HCT116 (cell line): ENCODE measurements at regions of chr17 and their contacts with region 1.

Region 1: DNA sequence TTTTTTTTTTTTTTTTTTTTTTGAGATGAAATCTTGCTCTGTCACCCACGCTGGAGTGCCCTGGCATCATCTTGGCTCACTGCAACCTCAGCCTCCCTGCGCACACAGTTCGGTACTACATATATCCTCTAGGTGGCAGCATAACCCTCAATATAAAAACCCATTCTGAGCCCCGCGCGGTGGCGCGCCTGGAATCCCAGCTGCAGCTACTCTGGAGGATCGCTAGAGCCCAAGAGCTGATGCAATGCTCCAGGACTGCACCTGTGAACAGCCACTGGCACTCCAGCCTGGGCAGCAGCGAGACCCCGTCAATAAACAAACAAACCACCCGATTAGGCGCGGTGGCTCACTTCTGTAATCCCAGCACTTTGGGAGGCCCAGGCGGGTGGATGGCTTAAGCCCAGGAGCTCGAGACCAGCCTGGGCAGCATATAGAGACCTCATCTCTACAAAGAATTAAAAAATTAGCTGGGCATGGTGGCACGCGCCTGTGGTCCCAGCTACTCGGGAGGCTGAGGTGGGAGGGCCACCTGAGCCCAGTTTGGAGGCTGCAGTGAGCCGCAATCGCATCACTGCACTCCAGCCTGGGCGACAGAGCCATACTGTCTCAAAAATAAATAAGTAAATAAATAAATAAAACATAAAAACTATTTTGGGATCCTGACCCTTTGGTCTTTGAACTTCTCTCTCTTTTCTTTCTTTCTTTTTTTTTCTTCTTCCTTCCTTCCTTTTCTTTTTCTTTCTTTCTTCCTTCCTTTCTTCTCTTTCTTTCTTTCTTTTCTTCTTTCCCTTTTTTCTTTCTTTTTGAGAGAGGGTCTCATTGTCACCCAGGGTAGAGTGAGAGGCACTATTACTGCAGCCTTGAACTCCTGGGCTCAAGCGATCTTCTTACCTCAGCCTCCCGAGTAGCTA is 15.4 kb upstream of the AKAP10 start:
- DNase-seq: peak; percentile 89
- ATAC-seq: peak; percentile 98
- H3K4me3 ChIP-seq: peak overlapping the region; percentile 17 to 37; a peak in 3 of 4 replicates
- H3K27ac ChIP-seq: no peak overlapping the region
- H3K4me1 ChIP-seq: peaks cover 9% of the 10 kb centered on the region in 2 experiments; a peak in 2 of 4 replicates
- H3K27me3 ChIP-seq: no peaks in the 10 kb centered on the region
- CTCF ChIP-seq: peak; percentile 69 to 97 (median 79)
- POLR2A ChIP-seq: no peak
- RAD21 ChIP-seq: peak; percentile 89

Region 2: GRCh38 chr17:20009302-20010098 is 16.4 kb after region 1 on chr17 and contains the start of gene SPECC1:
- CTCF ChIA-PET with region 1: interaction called, 47 read pairs
- POLR2A ChIA-PET with region 1: interaction called, 3 read pairs
- RAD21 ChIA-PET with region 1: interaction called in 1 of 2 experiments, 7 read pairs
- intact Hi-C with region 1: no loop called
- DNase-seq: peak; percentile 49
- ATAC-seq: peak; percentile 93
- H3K4me3 ChIP-seq: peak within 1 kb of the TSS; percentile 59 to 71
- H3K27ac ChIP-seq: peak within 1 kb of the TSS; percentile 53
- H3K4me1 ChIP-seq: peaks cover 5 to 25% of the 10 kb centered on the region in 2 experiments; a peak in 2 of 4 replicates
- H3K27me3 ChIP-seq: 0 out of 2 replicates have a peak, but pooled peaks cover 5% of the 10 kb centered on the region
- CTCF ChIP-seq: peak; percentile 59 to 96 (median 79); a peak in 4 of 6 replicates
- POLR2A ChIP-seq: no peak
- RAD21 ChIP-seq: no peak
- total RNA-seq, gene SPECC1: 43.5 TPM

Region 3: DNA sequence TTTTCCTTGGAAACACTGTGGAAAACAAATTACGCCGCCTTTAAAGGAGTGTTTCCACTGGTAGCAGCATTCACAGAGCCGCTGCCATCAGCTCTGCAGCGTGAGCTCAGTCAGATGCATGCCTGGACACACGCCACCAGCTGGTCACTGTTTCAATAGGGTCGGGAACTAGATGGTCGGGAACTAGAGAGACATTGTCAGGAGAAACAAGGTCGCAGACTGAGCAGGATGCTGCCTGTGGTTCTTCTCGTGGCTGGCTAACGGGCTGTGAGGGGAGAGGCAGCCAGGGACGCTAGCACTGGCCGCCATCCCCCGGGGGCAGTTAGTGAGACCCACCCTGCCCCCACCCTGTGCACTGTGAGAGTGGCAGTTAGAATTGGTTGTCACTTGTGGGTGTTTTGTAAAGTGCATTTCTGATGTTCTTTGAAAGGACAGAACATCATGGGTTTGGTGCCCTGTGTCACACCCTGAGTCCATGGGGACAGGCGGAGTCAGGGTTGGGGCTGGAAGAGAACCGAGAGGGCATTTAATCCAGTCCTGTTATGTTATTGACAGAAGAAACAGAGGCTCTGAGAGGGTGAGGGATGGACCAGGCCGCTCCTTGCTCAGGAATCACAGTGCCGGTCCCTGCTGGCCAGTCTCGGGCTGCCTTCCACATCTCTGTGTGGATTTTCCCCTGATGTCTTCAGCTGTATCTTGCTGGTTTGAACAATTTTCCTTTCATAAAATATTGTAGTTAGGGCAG is 102.5 kb after region 1 on chr17:
- CTCF ChIA-PET with region 1: interaction called, 25 read pairs
- POLR2A ChIA-PET with region 1: no interaction called
- RAD21 ChIA-PET with region 1: interaction called in 1 of 2 experiments, 3 read pairs
- intact Hi-C with region 1: no loop called
- DNase-seq: peak; percentile 22
- ATAC-seq: peak; percentile 94
- H3K4me3 ChIP-seq: peak overlapping the region in 1 of 2 experiments; percentile 11; a peak in 1 of 4 replicates
- H3K27ac ChIP-seq: no peak overlapping the region
- H3K4me1 ChIP-seq: peaks cover 7 to 10% of the 10 kb centered on the region in 2 experiments; a peak in 2 of 4 replicates
- H3K27me3 ChIP-seq: no peaks in the 10 kb centered on the region
- CTCF ChIP-seq: peak in 2 of 3 experiments; percentile 35 to 53; a peak in 5 of 6 replicates
- POLR2A ChIP-seq: no peak
- RAD21 ChIP-seq: peak; percentile 33

Region 4: DNA sequence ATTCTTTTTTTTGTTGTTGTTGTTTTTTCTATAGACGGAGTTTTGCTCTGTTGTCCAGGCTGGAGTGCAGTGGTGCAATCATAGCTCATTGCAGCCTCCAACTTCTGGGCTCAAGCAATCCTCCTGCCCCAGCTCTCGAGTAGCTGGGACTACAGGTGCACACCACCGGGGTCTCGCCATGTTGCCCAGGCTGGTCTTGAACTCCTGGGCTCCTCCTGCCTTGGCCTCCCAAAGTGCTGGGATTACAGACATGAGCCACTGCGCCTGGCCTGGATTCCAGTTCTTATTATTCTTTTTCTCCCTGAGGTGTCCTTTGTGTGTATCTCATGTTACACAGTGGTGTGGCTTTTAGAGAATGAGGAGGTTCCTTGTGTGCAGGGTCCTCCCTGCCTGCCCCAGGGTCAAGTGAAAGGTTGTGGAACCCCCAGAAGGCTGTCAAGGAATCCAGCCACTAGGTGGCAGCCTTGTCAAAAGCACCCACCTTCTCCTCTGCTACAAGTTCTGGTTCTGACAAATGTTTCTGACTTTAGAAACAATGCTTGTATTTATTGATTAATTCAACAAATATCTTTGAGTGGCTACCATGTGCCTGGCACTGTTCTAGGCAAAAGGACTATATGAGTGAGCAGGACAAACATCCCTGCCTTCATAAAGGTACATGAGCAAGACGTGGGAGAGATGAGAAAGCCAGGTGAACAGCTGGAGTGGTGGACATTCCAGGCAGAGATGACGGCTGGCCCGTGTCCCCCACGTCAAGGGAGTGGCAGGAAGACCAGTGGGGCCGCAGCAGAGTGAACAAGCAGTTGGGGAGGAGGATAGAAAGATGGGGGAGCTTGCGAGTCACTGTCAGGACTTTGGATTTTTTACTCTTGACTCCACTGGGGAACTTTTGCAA is 128.5 kb after region 1 on chr17:
- CTCF ChIA-PET with region 1: interaction called, 74 read pairs
- POLR2A ChIA-PET with region 1: interaction called, 3 read pairs
- RAD21 ChIA-PET with region 1: interaction called, 6 to 10 read pairs
- intact Hi-C with region 1: loop called (anchors 1 kb)
- DNase-seq: peak; percentile 34
- ATAC-seq: peak; percentile 85
- H3K4me3 ChIP-seq: no peak overlapping the region
- H3K27ac ChIP-seq: no peak overlapping the region
- H3K4me1 ChIP-seq: peaks cover 5% of the 10 kb centered on the region in 2 experiments; a peak in 2 of 4 replicates
- H3K27me3 ChIP-seq: no peaks in the 10 kb centered on the region
- CTCF ChIP-seq: peak; percentile 88 to 95 (median 93)
- POLR2A ChIP-seq: no peak
- RAD21 ChIP-seq: peak; percentile 88

Region 5: GRCh38 chr17:20226814-20227482 is 233.9 kb after region 1 on chr17:
- CTCF ChIA-PET with region 1: interaction called, 9 read pairs
- POLR2A ChIA-PET with region 1: no interaction called
- RAD21 ChIA-PET with region 1: no interaction called
- intact Hi-C with region 1: loop called (anchors 10 kb)
- DNase-seq: peak; percentile 34
- ATAC-seq: peak; percentile 100
- H3K4me3 ChIP-seq: no peak overlapping the region
- H3K27ac ChIP-seq: no peak overlapping the region
- H3K4me1 ChIP-seq: 0 out of 4 replicates have a peak, but pooled peaks cover 0 to 3% of the 10 kb centered on the region in 2 experiments
- H3K27me3 ChIP-seq: no peaks in the 10 kb centered on the region
- CTCF ChIP-seq: peak; percentile 86 to 95 (median 94)
- POLR2A ChIP-seq: no peak
- RAD21 ChIP-seq: peak; percentile 83